Right ventricle myocardium inferior (tissue), 1 donor: ENCODE measurements at regions of chr19 and their contacts with region 1.

Region 1: GRCh38 chr19:38929929-38930775 is at the start of gene SARS2:
- DNase-seq: peak; percentile 96
- ATAC-seq: peak; percentile 90
- total RNA-seq, gene SARS2: 16.0 TPM

Region 2: DNA sequence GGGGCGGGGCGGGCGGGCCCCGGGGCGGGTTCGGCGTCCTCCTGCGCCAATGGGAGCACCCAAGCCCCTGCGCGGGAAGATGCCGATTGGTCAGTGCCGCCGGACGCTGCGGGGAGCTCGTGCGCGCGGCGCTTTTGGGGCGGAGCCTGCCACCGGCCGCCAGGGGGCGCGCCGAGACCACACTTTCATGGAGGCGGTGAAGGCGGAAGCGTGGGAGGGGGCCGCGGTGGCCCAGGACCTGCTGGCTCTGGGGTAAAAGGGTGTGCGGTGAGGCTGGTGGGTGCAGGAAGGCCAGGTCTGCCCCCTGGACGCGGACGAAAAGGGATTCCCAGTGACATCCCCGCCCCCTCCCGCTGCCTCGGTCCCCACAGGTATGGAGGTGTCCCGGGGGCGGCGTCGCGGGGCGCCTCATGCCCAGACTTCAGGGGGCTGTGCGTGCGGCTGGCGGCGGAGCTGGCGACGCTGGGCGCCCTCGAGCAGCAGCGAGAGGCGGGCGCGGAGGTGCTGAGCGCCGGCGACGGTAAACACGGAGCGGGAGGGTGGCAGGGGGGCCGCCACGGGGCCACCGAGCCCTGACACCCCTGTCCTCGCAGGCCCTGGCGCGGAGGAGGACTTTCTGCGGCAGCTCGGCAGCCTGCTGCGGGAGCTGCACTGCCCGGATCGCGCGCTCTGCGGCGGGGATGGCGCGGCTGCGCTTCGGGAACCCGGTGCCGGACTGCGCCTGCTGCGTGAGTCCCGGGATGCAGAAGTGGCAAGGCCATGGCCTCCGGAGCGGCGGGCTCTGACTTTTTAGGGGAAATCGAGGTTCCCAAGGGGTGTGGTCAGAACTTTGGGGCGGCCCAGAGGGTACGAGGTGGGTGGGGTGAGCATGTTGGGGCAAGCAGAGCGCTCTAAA is 526.9 kb before region 1 on chr19 and contains the start of gene FAM98C:
- intact Hi-C with region 1: loop called (anchors 2 kb)
- DNase-seq: peak; percentile 98
- ATAC-seq: peak; percentile 99
- total RNA-seq, gene FAM98C: 15.1 TPM

Region 3: GRCh38 chr19:38544034-38544958 is 385.9 kb before region 1 on chr19:
- intact Hi-C with region 1: loop called (anchors 1 kb)
- DNase-seq: no peak
- ATAC-seq: peak; percentile 79

Region 4: DNA sequence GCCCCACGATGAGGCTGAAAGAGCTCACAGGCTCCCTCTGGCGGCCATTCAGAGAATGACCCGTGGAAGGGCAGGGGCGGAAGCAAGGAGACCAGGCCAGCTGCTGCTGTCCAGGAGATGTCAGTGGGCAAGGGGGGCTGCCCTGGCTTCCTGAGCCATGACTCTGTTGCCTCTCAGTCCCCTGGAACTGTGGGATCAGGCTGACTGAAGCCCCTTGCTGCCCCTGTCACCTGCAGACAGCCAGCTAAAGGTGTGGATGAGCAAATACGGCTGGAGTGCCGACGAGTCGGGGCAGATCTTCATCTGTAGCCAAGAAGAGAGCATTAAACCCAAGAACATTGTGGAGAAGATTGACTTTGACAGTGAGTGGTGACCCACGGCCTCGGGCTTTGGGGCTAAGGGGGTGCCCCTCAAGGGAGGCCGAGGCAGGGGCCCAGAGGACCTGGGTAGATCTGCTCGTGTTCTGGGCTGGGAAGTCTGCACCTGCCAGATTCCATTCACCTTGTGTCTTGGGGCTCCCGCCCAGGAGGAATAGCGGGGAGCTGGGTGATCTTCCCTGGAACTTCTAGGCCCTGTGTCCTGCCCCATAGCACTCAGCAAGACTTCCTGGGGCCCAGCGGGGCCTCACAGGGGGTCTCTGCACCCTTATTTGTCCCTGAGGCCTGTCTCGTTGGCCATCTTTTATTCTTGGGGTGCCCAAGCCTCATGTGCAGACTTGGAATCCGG is 295.2 kb before region 1 on chr19:
- intact Hi-C with region 1: loop called (anchors 5 kb)
- DNase-seq: peak; percentile 89
- ATAC-seq: peak; percentile 57

Region 5: DNA sequence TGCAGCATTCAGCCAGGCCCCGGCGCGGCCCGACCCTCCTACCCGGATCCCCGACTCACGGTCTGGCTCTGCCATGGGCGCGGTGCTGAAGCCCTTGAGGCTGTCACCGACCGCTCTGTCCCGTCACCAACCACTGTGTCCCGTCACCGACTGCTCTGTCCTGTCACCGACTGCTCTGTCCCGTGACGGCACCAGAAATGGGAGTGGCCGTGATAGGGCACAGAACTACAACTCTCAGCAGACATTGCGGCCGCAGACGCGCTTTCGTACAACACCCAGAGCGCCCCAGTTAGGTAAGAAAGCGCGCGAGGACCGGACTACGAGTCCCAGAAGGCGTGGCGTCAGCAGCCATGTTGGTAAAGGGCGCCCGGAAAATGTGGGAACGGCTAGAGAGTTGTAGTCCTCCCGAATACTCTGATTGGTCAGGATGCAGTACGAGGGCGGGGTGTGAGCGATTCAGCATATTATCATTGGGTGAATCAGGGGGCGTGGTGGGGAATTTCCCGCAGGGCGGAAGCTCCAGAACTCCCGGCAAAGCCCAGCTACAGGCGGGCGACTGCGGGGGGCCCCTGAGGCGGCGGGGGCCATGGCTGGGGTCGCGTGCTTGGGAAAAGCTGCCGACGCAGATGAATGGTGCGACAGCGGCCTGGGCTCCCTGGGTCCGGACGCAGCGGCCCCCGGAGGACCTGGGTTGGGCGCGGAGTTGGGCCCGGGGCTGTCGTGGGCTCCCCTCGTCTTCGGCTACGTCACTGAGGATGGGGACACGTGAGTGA is 30.5 kb before region 1 on chr19 and contains the starts of genes NFKBIB and SIRT2:
- intact Hi-C with region 1: loop called (anchors 2 kb)
- DNase-seq: peak; percentile 100
- ATAC-seq: peak; percentile 99
- total RNA-seq, gene NFKBIB: 17.9 TPM
- total RNA-seq, gene SIRT2: 99.8 TPM